IMR-90 (cell line): ENCODE measurements at regions of chr12 and their contacts with region 1.

Region 1: DNA sequence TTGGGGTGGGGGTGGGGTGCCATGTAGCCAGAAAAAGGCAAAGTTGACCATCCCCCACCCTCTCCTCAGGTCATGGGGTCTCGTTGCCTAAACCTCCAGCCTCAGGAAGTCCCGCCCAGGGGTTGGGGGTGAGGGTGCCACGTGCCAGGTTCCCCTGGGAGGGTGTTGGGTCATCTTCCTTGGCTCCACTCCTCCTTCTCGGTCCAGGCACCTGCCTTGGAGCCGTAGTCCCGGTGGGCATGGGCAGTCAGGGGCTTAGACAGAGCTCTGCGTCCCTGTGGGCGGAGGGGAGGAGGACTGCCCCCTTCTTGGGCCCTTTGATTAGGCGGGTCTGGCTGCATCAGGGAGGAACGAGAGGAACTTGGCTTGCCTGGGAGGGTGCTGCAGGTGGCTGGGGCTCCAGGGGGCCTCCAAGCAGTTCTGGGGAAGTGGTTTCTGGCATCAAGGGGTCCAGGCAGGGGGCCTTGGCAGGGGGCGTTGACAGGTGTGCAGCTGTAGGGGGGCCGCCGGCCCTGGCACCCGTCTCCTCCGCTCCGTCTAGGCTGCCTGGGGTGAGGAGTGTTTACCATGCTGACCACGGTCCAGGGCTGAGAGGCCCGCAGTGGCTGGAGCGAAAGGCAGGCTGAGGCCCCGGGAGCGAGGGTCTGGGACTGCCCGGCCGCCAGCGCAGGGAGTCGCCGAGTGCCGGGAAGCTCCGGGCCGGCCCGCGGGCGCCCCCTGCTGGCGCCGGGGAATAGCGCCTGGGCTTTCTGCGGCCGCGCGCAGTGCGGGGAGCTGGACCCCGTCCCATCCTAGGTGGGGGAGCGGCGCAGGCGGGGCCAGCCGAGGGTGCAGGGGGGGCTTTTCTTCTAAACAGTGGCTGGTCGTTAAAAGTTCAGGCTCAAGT is 7.9 kb downstream of the SETD1B start:
- DNase-seq: peak; percentile 66
- ATAC-seq: peak; percentile 86
- H3K4me3 ChIP-seq: peak overlapping the region; percentile 50
- H3K27ac ChIP-seq: peak overlapping the region; percentile 58
- H3K4me1 ChIP-seq: peaks cover 19% of the 10 kb centered on the region
- H3K27me3 ChIP-seq: no peaks in the 10 kb centered on the region
- CTCF ChIP-seq: peak; percentile 94
- POLR2A ChIP-seq: no peak
- RAD21 ChIP-seq: peak; percentile 88

Region 2: DNA sequence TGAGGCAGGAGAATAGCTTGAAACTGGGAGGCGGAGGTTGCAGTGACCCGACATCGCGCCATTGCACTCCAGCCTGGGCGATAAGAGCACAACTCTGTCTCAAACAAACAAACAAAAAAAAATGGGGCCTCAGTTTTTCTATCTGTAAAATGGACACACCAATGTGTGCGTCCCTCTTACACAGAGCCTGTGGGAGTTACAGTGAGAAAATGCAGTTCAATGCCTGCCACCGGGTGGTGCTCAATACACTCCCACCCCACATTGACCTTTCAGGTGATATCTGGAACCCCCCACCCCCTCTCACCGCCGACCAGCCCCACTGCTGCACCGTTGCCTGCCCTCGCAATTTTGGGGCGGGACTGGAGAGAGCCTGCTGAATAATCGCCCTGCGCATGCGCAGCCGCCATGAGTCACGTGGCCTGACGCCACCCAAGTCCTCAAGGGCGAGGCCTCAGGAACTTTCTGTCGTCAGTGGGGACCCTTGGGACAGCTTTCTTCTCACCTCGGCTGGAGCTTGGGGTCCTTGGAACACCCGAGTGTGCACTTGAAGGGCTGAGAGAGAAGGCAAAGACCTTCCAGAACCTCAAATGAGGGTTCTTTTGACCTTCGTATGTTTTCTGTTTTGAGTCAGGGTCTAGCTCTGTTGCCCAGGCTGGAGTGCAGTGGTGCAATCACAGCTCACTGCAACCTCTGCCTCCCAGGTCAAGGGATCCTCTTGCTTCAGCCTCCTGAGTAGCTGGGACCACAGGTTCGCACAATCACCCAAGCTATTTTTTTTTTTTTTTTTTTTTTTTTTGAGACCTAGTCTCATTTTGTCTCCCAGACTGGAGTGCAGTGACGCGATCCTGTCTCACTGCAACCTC is 1185.9 kb before region 1 on chr12:
- CTCF ChIA-PET with region 1: no interaction called
- POLR2A ChIA-PET with region 1: no interaction called
- dilution Hi-C with region 1: no loop called
- in situ Hi-C with region 1: no loop called
- intact Hi-C with region 1: no loop called
- DNase-seq: no peak
- ATAC-seq: no peak
- H3K4me3 ChIP-seq: no peak overlapping the region
- H3K27ac ChIP-seq: no peak overlapping the region
- H3K4me1 ChIP-seq: no peaks in the 10 kb centered on the region
- H3K27me3 ChIP-seq: peaks cover 35% of the 10 kb centered on the region
- CTCF ChIP-seq: no peak
- POLR2A ChIP-seq: no peak
- RAD21 ChIP-seq: no peak

Region 3: GRCh38 chr12:121773011-121773777 is 38.5 kb before region 1 on chr12:
- CTCF ChIA-PET with region 1: interaction called, 4 read pairs
- POLR2A ChIA-PET with region 1: no interaction called
- dilution Hi-C with region 1: no loop called
- in situ Hi-C with region 1: no loop called
- intact Hi-C with region 1: loop called (anchors 1 kb)
- DNase-seq: peak; percentile 58
- ATAC-seq: peak; percentile 86
- H3K4me3 ChIP-seq: no peak overlapping the region
- H3K27ac ChIP-seq: no peak overlapping the region
- H3K4me1 ChIP-seq: peaks cover 6% of the 10 kb centered on the region
- H3K27me3 ChIP-seq: no peaks in the 10 kb centered on the region
- CTCF ChIP-seq: peak; percentile 85
- POLR2A ChIP-seq: no peak
- RAD21 ChIP-seq: peak; percentile 93

Region 4: DNA sequence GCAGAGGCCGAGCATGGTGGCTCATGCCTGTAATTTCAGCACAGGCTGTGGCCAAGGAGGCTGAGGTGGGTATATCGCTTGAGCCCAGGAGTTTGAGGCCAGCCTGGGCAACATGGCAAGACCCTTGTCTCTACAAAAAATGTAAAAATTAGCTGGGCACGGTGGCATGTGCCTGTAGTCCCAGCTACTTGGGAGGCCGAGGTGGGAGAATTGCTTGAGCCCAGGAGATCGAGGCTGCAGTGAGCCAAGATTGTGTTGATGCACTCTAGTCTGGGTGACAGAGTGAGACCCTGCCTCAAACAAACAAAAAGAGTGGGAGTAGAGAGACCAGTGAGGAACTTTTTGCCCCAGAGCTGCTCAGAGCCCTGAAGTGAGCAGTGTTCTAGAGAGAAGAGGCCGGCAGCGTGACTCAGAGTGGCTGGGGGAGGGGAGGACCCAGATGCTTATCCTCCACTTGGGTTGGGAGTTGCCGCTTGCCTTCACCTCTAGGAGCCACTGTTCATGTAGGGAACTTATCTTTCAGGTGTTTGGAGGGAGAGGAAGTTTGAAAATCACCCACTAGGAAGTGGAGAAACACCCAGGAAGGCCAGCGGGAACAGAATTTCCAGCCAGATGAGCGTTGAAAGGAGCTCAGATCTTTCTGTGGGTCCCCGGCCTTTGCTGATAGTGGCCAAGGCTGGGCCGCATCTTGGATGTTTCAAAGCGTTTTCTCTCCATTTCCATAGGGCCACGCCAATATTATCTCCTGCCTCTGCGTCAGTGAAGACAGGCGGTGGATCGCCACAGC is 122.0 kb after region 1 on chr12:
- CTCF ChIA-PET with region 1: no interaction called
- POLR2A ChIA-PET with region 1: no interaction called
- dilution Hi-C with region 1: no loop called
- in situ Hi-C with region 1: no loop called
- intact Hi-C with region 1: no loop called
- DNase-seq: peak; percentile 42
- ATAC-seq: peak; percentile 77
- H3K4me3 ChIP-seq: no peak overlapping the region
- H3K27ac ChIP-seq: no peak overlapping the region
- H3K4me1 ChIP-seq: peaks cover 2% of the 10 kb centered on the region; the same call in 1 of the 2 replicates
- H3K27me3 ChIP-seq: no peaks in the 10 kb centered on the region
- CTCF ChIP-seq: no peak
- POLR2A ChIP-seq: no peak
- RAD21 ChIP-seq: no peak

Region 5: DNA sequence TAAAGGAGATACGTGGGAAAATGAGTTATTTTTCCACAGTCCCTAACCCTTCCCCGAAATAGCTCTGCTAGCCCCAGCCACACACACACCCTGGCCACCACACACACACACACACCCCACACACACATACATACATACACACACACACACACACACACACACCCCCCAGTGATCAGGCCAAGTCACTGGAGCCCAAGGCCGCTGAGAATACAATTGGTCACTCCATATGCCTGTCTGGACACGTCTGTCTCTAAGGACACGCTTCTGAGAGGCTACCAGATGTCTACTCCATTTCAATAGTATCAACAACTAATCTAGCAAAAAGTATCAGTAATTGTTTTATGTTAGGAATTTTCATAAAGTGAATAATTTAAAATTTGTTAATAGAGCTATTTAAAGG is 427.2 kb after region 1 on chr12:
- CTCF ChIA-PET with region 1: no interaction called
- POLR2A ChIA-PET with region 1: no interaction called
- dilution Hi-C with region 1: no loop called
- in situ Hi-C with region 1: no loop called
- intact Hi-C with region 1: no loop called
- DNase-seq: no peak
- ATAC-seq: no peak
- H3K4me3 ChIP-seq: no peak overlapping the region
- H3K27ac ChIP-seq: no peak overlapping the region
- H3K4me1 ChIP-seq: no peaks in the 10 kb centered on the region
- H3K27me3 ChIP-seq: no peaks in the 10 kb centered on the region
- CTCF ChIP-seq: no peak
- POLR2A ChIP-seq: no peak
- RAD21 ChIP-seq: no peak